ENCODE measurements at regions of chr12 and their contacts with region 1.

Region 1: DNA sequence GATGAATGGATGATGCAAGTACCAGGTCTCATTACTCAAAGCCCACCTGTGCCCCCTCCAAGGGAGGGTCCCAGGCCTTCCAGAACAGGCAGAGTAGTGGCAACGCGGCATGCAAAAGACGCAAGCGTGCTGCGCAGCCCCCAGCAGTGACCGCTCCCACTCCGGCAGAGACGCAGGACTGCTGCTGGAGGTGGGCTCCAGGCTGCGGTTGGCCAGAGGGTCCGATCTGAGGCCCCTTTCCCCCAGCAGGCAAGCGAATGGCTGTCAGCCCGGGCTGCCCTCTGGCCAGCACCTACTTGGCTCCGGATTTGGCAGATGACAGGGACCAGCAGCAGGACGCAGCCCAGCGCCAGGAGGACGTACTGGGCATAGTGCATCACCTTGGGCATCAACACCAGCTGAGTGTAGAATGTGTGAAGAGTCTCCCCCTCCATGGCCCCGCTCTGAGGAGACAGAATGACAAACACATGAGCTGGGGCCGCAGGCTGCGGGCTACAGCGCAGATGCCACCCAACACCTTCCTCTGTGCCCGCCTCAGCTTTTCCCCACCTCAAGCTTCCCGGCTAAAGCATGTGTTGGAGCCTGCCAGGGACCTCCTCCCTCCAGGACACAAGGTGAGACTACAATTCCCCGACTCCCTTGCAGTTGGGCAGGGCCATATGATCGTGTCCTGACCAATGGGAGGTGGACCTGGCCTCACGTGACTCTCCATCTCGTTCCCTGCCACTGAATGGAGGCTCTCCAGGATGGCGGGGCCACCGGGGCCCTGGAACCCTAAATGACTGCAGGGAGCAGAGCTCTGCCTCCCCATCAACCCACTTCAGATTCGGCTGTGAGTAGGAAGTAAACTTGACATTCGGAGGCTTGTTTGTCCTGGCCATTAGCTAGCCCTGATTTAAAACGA is 77.4 kb downstream of the SCARB1 start:
- DNase-seq: no peak
- ATAC-seq: peak; percentile 29 to 48 (median 38)
- H3K4me3 ChIP-seq: no peak overlapping the region
- H3K27ac ChIP-seq: no peak overlapping the region
- H3K4me1 ChIP-seq: no peaks in the 10 kb centered on the region
- H3K27me3 ChIP-seq: no peaks in the 10 kb centered on the region
- CTCF ChIP-seq: no peak
- POLR2A ChIP-seq: no peak

Region 2: GRCh38 chr12:124898200-124898922 is 112.0 kb after region 1 on chr12:
- intact Hi-C with region 1: loop called in 1 of 2 experiments (anchors 10 kb)
- DNase-seq: peak; percentile 51 to 80 (median 78)
- ATAC-seq: peak; percentile 59 to 82 (median 75)
- H3K4me3 ChIP-seq: no peak overlapping the region
- H3K27ac ChIP-seq: peak overlapping the region; percentile 65 to 84 (median 79)
- H3K4me1 ChIP-seq: peaks cover 0 to 40% (median 12%) of the 10 kb centered on the region in 4 donors
- H3K27me3 ChIP-seq: no peaks in the 10 kb centered on the region
- CTCF ChIP-seq: peak; percentile 49 to 67 (median 60)
- POLR2A ChIP-seq: no peak